ENCODE measurements at regions of chr9 and their contacts with region 1.

Region 1: GRCh38 chr9:113578882-113579282 is 115.4 kb downstream of the RGS3 start:
- DNase-seq: peak; percentile 96
- H3K4me3 Mint-ChIP-seq: peak overlapping the region; percentile 85
- H3K27ac Mint-ChIP-seq: peak overlapping the region; percentile 96
- H3K4me1 Mint-ChIP-seq: peaks cover 75% of the 10 kb centered on the region
- H3K27me3 Mint-ChIP-seq: no peaks in the 10 kb centered on the region

Region 2: GRCh38 chr9:113349445-113350094 is 229.3 kb before region 1 on chr9 and contains the start of gene BSPRY:
- CTCF ChIA-PET with region 1: no interaction called
- POLR2A ChIA-PET with region 1: no interaction called
- intact Hi-C with region 1: loop called (anchors 5 kb)
- DNase-seq: peak; percentile 41
- H3K4me3 Mint-ChIP-seq: peak within 1 kb of the TSS; percentile 77
- H3K27ac Mint-ChIP-seq: peak within 1 kb of the TSS; percentile 69
- H3K4me1 Mint-ChIP-seq: peaks cover 56% of the 10 kb centered on the region
- H3K27me3 Mint-ChIP-seq: peaks cover 32% of the 10 kb centered on the region
- total RNA-seq, gene BSPRY: 7.6 to 8.5 TPM

Region 3: GRCh38 chr9:113446323-113446740 is 132.6 kb before region 1 on chr9:
- CTCF ChIA-PET with region 1: interaction called, 54 read pairs
- POLR2A ChIA-PET with region 1: no interaction called
- intact Hi-C with region 1: loop called (anchors 2 kb)
- DNase-seq: no peak
- H3K4me3 Mint-ChIP-seq: no peak overlapping the region
- H3K27ac Mint-ChIP-seq: peak overlapping the region; percentile 55
- H3K4me1 Mint-ChIP-seq: no peaks in the 10 kb centered on the region
- H3K27me3 Mint-ChIP-seq: no peaks in the 10 kb centered on the region

Region 4: GRCh38 chr9:113523421-113524236 is 55.3 kb before region 1 on chr9:
- CTCF ChIA-PET with region 1: interaction called, 22 read pairs
- POLR2A ChIA-PET with region 1: interaction called, 17 read pairs
- intact Hi-C with region 1: no loop called
- DNase-seq: peak; percentile 80
- H3K4me3 Mint-ChIP-seq: peak overlapping the region; percentile 27
- H3K27ac Mint-ChIP-seq: peak overlapping the region; percentile 53
- H3K4me1 Mint-ChIP-seq: peaks cover 60% of the 10 kb centered on the region
- H3K27me3 Mint-ChIP-seq: no peaks in the 10 kb centered on the region

Region 5: DNA sequence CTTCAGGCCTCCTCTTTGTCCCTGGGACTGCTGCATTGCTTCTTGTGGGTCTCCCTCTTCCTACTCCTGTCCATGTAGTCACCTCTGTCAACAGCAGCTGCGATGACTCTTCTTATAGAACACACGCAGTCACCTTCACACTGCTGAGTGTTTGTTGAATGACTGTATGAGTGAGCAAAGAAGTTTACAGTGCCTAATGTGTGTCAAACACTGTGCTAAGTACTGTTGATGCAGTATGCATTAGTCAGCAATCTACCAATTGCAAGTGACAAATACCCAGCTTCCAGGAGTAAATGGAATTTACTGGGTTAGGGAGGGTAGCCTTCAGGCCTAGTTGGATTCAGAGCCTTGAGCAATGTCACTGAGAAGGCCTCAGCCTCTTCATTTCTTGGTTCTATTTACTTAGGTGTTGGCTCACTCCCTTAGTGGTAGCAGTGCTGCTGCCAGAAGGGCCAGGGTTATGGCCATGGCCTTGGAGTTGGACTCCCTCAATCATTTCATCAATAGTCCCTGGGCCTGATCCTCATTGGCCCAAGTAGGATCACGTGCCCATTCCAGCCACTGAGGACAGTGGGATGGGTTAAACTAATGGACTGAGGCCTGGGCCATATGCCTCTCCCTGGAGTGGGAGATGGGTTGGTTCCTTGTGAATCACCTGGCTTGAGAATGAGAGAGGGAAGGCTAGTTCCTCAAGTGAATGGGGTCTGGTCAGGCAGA is 21.8 kb before region 1 on chr9:
- CTCF ChIA-PET with region 1: interaction called, 7 read pairs
- POLR2A ChIA-PET with region 1: interaction called, 5 read pairs
- intact Hi-C with region 1: loop called (anchors 1 kb)
- DNase-seq: peak; percentile 26
- H3K4me3 Mint-ChIP-seq: no peak overlapping the region
- H3K27ac Mint-ChIP-seq: peak overlapping the region; percentile 44
- H3K4me1 Mint-ChIP-seq: peaks cover 47% of the 10 kb centered on the region
- H3K27me3 Mint-ChIP-seq: no peaks in the 10 kb centered on the region

Region 6: DNA sequence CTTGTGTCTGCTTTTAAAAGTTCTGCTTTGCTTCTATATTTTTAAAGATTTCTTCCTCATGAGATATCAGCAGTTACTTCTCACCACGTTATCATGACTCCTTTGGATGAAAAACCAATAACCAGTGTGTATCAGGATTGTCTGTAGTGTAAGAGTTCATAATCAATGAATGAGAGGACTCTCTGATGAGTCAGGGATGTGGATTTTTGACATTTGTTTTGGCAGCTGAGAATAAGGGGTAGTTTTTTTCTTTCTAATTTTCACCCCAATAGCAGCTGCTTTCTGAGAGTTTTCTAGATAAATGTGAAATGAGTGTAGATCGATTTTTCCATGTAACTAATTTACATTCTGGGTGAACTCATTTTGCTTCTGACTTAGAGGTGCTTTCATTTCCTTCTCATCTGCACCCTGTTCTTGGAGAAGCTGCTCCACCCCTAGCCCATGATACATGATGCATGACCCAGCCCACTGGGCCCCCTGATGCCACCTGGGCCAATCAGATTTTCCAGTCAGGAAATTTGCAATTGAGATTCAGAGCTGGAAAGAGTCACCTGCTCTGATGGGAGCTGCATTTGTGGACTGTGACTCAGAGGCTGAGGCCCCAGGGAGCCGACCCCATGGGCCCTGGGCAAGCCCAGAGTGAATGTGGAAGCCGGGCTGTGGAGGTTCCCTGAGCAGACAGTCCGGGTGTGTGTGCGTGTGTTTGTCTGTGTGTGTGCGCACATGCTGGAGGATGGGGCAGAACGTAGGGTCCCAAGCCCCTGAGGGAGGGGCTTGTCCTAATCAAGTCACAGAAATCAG is 43.9 kb after region 1 on chr9:
- CTCF ChIA-PET with region 1: interaction called, 4 read pairs
- POLR2A ChIA-PET with region 1: interaction called, 4 read pairs
- intact Hi-C with region 1: loop called (anchors 1 kb)
- DNase-seq: peak; percentile 92
- H3K4me3 Mint-ChIP-seq: peak overlapping the region; percentile 63
- H3K27ac Mint-ChIP-seq: peak overlapping the region; percentile 99
- H3K4me1 Mint-ChIP-seq: peaks cover 54% of the 10 kb centered on the region
- H3K27me3 Mint-ChIP-seq: no peaks in the 10 kb centered on the region